SK-N-SH (cell line): ENCODE measurements at regions of chr2 and their contacts with region 1.

Region 1: GRCh38 chr2:237512774-237513466 is 25.9 kb downstream of the MLPH start:
- DNase-seq: peak; percentile 91
- H3K4me3 ChIP-seq: peak overlapping the region in 1 of 2 experiments; percentile 33; a peak in 1 of 4 replicates
- H3K27ac ChIP-seq: peak overlapping the region in 1 of 2 experiments; percentile 100; a peak in 2 of 4 replicates
- H3K4me1 ChIP-seq: peaks cover 2 to 12% of the 10 kb centered on the region in 2 experiments; a peak in 2 of 4 replicates
- H3K27me3 ChIP-seq: no peaks in the 10 kb centered on the region
- CTCF ChIP-seq: peak; percentile 96
- EP300 ChIP-seq: no peak
- RAD21 ChIP-seq: peak; percentile 93

Region 2: DNA sequence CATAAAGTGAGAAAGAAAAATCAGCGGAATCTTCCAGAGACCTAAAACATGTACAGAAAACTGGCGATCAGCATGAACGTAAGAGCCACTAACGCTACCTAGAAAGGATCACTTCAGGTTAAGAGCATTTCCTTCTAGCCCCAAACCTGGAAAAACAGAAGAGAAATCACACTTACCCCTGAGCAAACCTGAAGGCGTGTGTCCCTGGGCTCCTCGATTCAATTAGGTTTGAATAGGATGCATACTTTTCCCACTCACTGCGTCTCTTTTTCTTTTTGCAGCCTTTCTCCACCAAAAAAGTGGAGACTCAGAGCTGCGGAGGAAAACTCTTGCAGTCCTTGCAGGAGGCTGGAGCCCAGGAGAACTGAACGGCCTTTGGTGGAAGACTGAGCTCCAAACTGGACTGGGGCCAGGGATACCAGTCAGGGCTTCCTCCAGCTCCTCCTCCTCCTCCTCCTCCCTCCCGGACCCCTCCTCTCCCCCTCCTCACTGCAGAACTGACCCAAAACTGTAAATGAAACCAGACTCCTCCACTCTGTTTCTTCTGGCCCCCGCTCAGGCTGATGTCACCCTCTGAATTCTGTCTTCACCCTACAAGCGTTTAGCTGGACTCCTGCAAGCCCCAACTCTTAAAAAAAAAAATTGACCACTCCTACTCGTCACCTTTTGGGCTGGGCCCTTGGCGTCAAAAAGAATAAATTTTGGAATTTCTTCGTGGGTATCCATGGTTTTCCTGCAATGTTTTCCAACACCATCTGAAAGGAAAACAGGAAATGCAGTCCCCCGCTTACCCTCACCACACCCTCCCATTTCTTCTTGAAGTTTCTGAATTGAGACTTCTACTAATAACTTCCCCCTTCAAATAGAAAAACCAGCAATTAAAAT is 98.9 kb before region 1 on chr2 and contains the start of gene COL6A3:
- CTCF ChIA-PET with region 1: interaction called, 13 read pairs
- POLR2A ChIA-PET with region 1: no interaction called
- DNase-seq: no peak
- H3K4me3 ChIP-seq: peak within 1 kb of the TSS in 1 of 2 experiments; percentile 39; a peak in 1 of 4 replicates
- H3K27ac ChIP-seq: peak within 1 kb of the TSS in 1 of 2 experiments; percentile 6; a peak in 2 of 4 replicates
- H3K4me1 ChIP-seq: peaks cover 0 to 5% of the 10 kb centered on the region in 2 experiments; a peak in 1 of 4 replicates
- H3K27me3 ChIP-seq: no peaks in the 10 kb centered on the region
- CTCF ChIP-seq: no peak
- EP300 ChIP-seq: no peak
- RAD21 ChIP-seq: no peak
- polyA plus RNA-seq, gene COL6A3: 10.7 and 18.5 TPM in 2 replicates

Region 3: GRCh38 chr2:237529452-237530402 is 16.8 kb after region 1 on chr2:
- CTCF ChIA-PET with region 1: interaction called, 42 read pairs
- POLR2A ChIA-PET with region 1: no interaction called
- DNase-seq: no peak
- H3K4me3 ChIP-seq: no peak overlapping the region
- H3K27ac ChIP-seq: no peak overlapping the region
- H3K4me1 ChIP-seq: peaks cover 0 to 8% of the 10 kb centered on the region in 2 experiments; a peak in 1 of 4 replicates
- H3K27me3 ChIP-seq: no peaks in the 10 kb centered on the region
- CTCF ChIP-seq: no peak
- EP300 ChIP-seq: no peak
- RAD21 ChIP-seq: no peak

Region 4: GRCh38 chr2:237553948-237554347 is 41.0 kb after region 1 on chr2:
- CTCF ChIA-PET with region 1: interaction called, 24 read pairs
- POLR2A ChIA-PET with region 1: no interaction called
- DNase-seq: no peak
- H3K4me3 ChIP-seq: no peak overlapping the region
- H3K27ac ChIP-seq: no peak overlapping the region
- H3K4me1 ChIP-seq: peaks cover 0 to 3% of the 10 kb centered on the region in 2 experiments; a peak in 1 of 4 replicates
- H3K27me3 ChIP-seq: no peaks in the 10 kb centered on the region
- CTCF ChIP-seq: no peak
- EP300 ChIP-seq: no peak
- RAD21 ChIP-seq: no peak

Region 5: GRCh38 chr2:237603718-237604362 is 90.9 kb after region 1 on chr2:
- CTCF ChIA-PET with region 1: interaction called, 10 read pairs
- POLR2A ChIA-PET with region 1: no interaction called
- DNase-seq: no peak
- H3K4me3 ChIP-seq: no peak overlapping the region
- H3K27ac ChIP-seq: no peak overlapping the region
- H3K4me1 ChIP-seq: peaks cover 0 to 3% of the 10 kb centered on the region in 2 experiments; a peak in 1 of 4 replicates
- H3K27me3 ChIP-seq: no peaks in the 10 kb centered on the region
- CTCF ChIP-seq: no peak
- EP300 ChIP-seq: no peak
- RAD21 ChIP-seq: no peak